ENCODE measurements at regions of chr22 and their contacts with region 1.

Region 1: DNA sequence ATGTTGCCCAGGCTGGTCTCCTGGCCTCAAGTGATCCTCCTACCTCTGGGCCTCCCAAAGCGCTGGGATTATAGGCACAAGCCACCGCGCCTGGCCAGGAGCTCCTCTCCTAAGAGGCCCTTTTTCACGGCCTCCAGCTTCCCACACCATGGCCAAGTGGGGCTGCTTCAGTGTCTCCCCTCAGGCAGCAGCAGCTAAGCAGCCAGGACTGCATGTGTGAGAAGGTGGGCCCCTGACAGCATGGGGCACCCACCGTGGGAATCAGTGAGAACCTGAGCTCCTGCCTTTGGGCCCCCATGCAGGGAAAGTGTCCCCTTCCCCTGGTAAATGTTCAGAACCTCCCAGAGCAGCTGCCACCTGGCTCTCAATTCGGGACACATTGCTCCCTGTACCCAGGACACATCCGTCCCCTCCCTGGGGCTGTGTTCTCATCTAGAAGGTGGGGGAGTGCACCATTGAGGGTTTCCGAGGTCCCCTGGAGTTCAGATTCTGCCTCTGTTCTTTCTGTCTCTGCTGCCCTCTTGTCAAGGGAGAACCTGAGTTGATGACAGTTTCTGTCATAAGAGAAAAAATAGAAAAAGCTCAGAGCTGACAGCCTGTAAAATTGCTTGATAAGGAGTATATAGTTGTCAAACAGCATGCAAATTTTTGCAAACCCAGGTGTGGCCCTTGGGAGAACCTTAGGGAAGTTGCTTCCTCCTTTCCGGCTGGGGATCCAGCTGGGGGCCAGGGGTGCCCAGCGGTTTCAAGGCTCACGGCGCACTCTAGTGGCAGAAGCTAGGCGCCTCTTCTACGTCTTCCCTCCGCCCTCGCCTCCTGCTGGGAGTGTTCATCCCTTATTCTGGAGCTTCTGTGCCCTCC is 29.7 kb downstream of the FAM83F start:
- DNase-seq: peak; percentile 24
- ATAC-seq: peak; percentile 91
- H3K4me3 ChIP-seq: no peak overlapping the region
- H3K27ac ChIP-seq: no peak overlapping the region
- H3K4me1 ChIP-seq: no peaks in the 10 kb centered on the region
- H3K27me3 ChIP-seq: no peaks in the 10 kb centered on the region
- CTCF ChIP-seq: peak; percentile 87 to 90 (median 89)
- POLR2A ChIP-seq: no peak
- RAD21 ChIP-seq: peak; percentile 94

Region 2: DNA sequence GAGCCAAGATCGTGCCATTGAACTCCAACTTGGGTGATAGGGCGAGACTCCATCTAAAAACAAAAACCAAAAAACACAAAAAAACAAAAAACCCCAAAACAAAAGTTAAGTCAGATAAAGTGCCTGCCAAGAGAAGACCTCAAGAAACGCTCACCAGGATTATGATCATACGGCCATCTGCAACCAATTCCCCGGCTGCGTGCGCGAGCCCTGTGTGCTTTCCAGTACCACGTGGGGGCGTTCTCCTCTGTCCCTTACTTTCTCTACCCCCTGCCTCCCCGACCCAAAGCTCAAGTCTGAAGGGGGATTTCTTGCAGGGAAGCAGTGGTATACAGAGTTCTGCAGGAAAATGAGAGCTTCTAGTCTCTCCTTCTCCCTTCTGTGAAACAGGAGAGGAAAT is 481.3 kb before region 1 on chr22:
- CTCF ChIA-PET with region 1: interaction called, 19 read pairs
- POLR2A ChIA-PET with region 1: no interaction called
- RAD21 ChIA-PET with region 1: interaction called, 4 to 5 read pairs
- intact Hi-C with region 1: loop called (anchors 2 kb)
- DNase-seq: no peak
- ATAC-seq: peak; percentile 89
- H3K4me3 ChIP-seq: no peak overlapping the region
- H3K27ac ChIP-seq: no peak overlapping the region
- H3K4me1 ChIP-seq: peaks cover 3 to 8% of the 10 kb centered on the region in 2 experiments; a peak in 2 of 4 replicates
- H3K27me3 ChIP-seq: peaks cover 14% of the 10 kb centered on the region; the same call in 1 of the 2 replicates
- CTCF ChIP-seq: peak; percentile 70 to 74 (median 73); a peak in 5 of 6 replicates
- POLR2A ChIP-seq: no peak
- RAD21 ChIP-seq: peak; percentile 79

Region 3: GRCh38 chr22:39559454-39560105 is 464.9 kb before region 1 on chr22:
- CTCF ChIA-PET with region 1: interaction called, 11 read pairs
- POLR2A ChIA-PET with region 1: no interaction called
- RAD21 ChIA-PET with region 1: interaction called in 1 of 2 experiments, 3 read pairs
- intact Hi-C with region 1: no loop called
- DNase-seq: no peak
- ATAC-seq: peak; percentile 87
- H3K4me3 ChIP-seq: no peak overlapping the region
- H3K27ac ChIP-seq: no peak overlapping the region
- H3K4me1 ChIP-seq: peaks cover 0 to 8% of the 10 kb centered on the region in 2 experiments; a peak in 2 of 4 replicates
- H3K27me3 ChIP-seq: peaks cover 10% of the 10 kb centered on the region; the same call in 1 of the 2 replicates
- CTCF ChIP-seq: peak; percentile 43 to 87 (median 86); a peak in 5 of 6 replicates
- POLR2A ChIP-seq: no peak
- RAD21 ChIP-seq: peak; percentile 67

Region 4: DNA sequence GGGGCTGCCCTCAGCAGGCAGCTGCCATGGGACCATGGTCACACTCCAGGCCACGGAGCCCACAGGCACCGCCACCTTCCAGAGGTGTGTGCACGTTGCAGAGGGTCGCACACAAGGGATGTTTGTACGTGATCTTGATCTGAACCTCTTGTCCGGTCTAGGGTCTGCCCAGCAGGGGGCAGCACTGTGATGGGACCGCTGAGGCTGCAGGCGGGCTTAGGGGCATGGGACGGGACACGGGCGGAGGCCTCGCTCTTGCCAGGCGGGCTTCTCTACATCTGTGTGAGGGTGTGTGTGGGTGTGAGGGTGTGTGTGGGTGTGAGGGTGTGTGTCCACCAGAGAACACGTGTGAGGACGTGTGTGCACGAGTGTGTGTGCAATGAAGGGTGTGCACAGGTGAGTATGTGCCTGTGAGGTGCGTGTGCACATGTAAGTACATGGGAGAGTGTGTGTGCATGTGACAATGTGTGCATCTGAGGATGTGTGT is 401.5 kb before region 1 on chr22:
- CTCF ChIA-PET with region 1: no interaction called
- POLR2A ChIA-PET with region 1: no interaction called
- RAD21 ChIA-PET with region 1: no interaction called
- intact Hi-C with region 1: loop called (anchors 2 kb)
- DNase-seq: peak; percentile 40
- ATAC-seq: peak; percentile 90
- H3K4me3 ChIP-seq: no peak overlapping the region
- H3K27ac ChIP-seq: no peak overlapping the region
- H3K4me1 ChIP-seq: no peaks in the 10 kb centered on the region; a peak in 1 of 4 replicates
- H3K27me3 ChIP-seq: no peaks in the 10 kb centered on the region
- CTCF ChIP-seq: peak; percentile 63 to 87 (median 84); a peak in 5 of 6 replicates
- POLR2A ChIP-seq: no peak
- RAD21 ChIP-seq: peak; percentile 85

Region 5: DNA sequence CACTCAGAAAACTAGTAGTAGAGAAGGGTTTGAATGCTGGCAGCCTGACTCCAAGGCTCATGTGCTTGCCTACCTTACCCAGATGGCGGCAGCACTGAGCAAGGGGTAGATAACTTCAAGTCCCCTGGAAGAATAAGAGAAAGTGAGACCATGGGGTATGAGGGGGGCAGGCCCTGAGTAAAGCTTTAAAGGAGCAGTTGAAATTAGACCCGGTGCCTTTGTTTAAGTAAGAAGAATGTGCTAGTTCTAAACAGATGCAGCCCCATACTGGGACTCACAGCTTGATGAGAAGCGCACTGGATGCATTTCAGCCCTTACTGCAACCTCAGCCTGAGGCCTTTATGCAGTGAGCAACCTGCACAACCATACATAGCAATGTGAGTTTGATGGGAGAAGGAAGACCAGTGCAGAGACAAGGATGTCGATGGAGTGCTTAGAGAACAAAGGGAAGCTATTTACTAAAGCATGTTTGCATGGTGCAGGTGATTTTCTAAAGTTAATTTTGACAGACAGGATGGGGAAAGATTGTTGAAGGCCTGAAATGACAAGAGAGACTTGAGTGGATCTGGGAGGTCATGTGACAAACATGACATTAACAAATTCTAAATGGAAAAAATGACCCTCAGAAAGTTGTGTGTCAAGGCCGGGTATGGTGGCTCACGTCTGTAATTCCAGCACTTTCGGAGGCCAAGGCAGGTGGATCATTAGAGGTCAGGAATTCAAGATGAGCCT is 91.3 kb before region 1 on chr22:
- CTCF ChIA-PET with region 1: interaction called, 19 read pairs
- POLR2A ChIA-PET with region 1: no interaction called
- RAD21 ChIA-PET with region 1: interaction called, 3 to 4 read pairs
- intact Hi-C with region 1: loop called (anchors 1 kb)
- DNase-seq: peak; percentile 35
- ATAC-seq: peak; percentile 81
- H3K4me3 ChIP-seq: no peak overlapping the region
- H3K27ac ChIP-seq: no peak overlapping the region
- H3K4me1 ChIP-seq: no peaks in the 10 kb centered on the region
- H3K27me3 ChIP-seq: peaks cover 87% of the 10 kb centered on the region
- CTCF ChIP-seq: peak; percentile 65 to 95 (median 89); a peak in 5 of 6 replicates
- POLR2A ChIP-seq: no peak
- RAD21 ChIP-seq: peak; percentile 63

Region 6: GRCh38 chr22:40036591-40037225 is 12.3 kb after region 1 on chr22:
- CTCF ChIA-PET with region 1: interaction called, 13 read pairs
- POLR2A ChIA-PET with region 1: interaction called, 3 read pairs
- RAD21 ChIA-PET with region 1: no interaction called
- intact Hi-C with region 1: no loop called
- DNase-seq: peak; percentile 62
- ATAC-seq: peak; percentile 94
- H3K4me3 ChIP-seq: no peak overlapping the region
- H3K27ac ChIP-seq: no peak overlapping the region
- H3K4me1 ChIP-seq: no peaks in the 10 kb centered on the region
- H3K27me3 ChIP-seq: no peaks in the 10 kb centered on the region
- CTCF ChIP-seq: peak; percentile 70 to 87 (median 84)
- POLR2A ChIP-seq: no peak
- RAD21 ChIP-seq: peak; percentile 93

Region 7: GRCh38 chr22:40044102-40044869 is 19.9 kb after region 1 on chr22:
- CTCF ChIA-PET with region 1: interaction called, 13 read pairs
- POLR2A ChIA-PET with region 1: interaction called, 3 read pairs
- RAD21 ChIA-PET with region 1: no interaction called
- intact Hi-C with region 1: no loop called
- DNase-seq: peak; percentile 98
- ATAC-seq: peak; percentile 91
- H3K4me3 ChIP-seq: peak overlapping the region; percentile 57 to 68
- H3K27ac ChIP-seq: peak overlapping the region; percentile 65
- H3K4me1 ChIP-seq: peaks cover 8 to 17% of the 10 kb centered on the region in 2 experiments
- H3K27me3 ChIP-seq: no peaks in the 10 kb centered on the region
- CTCF ChIP-seq: no peak
- POLR2A ChIP-seq: no peak
- RAD21 ChIP-seq: no peak